ENCODE measurements at regions of chr2 and their contacts with region 1.

Region 1: DNA sequence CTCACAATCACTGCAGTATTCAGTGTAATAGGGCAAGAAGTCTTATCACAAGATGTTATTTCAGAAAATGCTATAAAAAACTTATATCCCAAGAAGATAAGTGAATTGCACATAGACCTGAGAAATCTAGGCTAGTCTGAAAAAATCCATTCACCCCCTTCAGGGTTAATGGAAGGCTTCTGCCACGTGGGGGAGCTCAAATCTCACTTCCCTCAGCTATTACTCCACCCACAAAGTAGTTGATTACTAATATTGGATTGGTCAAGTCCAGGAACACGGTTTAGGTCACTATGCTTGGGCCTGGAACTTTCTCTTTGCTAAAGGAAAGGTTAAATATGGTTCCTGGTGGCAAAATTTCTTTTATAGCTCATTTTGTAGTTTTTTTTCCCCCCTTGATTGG is 51.2 kb upstream of the ADAM23 start:
- DNase-seq: peak; percentile 75
- H3K4me3 ChIP-seq: no peak overlapping the region
- H3K27ac ChIP-seq: no peak overlapping the region
- H3K4me1 ChIP-seq: no peaks in the 10 kb centered on the region
- H3K27me3 ChIP-seq: no peaks in the 10 kb centered on the region
- CTCF ChIP-seq: peak; percentile 71
- EP300 ChIP-seq: no peak
- RAD21 ChIP-seq: peak; percentile 89

Region 2: GRCh38 chr2:206556357-206556949 is 164.3 kb after region 1 on chr2:
- CTCF ChIA-PET with region 1: interaction called, 11 read pairs
- POLR2A ChIA-PET with region 1: no interaction called
- DNase-seq: peak; percentile 36
- H3K4me3 ChIP-seq: no peak overlapping the region; a peak in 1 of 4 replicates
- H3K27ac ChIP-seq: no peak overlapping the region
- H3K4me1 ChIP-seq: no peaks in the 10 kb centered on the region
- H3K27me3 ChIP-seq: no peaks in the 10 kb centered on the region
- CTCF ChIP-seq: peak; percentile 66
- EP300 ChIP-seq: no peak
- RAD21 ChIP-seq: peak; percentile 66